AG04450 (cell line): ENCODE measurements at regions of chr17 and their contacts with region 1.

Region 1: GRCh38 chr17:32936894-32937500 is 9.0 kb downstream of the TMEM98 start:
- DNase-seq: peak; percentile 42
- H3K4me3 ChIP-seq: no peak overlapping the region
- H3K27ac ChIP-seq: peak overlapping the region; percentile 39
- H3K27me3 ChIP-seq: no peaks in the 10 kb centered on the region
- CTCF ChIP-seq: peak; percentile 76

Region 2: GRCh38 chr17:32697728-32698625 is 239.0 kb before region 1 on chr17:
- CTCF ChIA-PET with region 1: no interaction called
- POLR2A ChIA-PET with region 1: no interaction called
- DNase-seq: no peak
- H3K4me3 ChIP-seq: no peak overlapping the region
- H3K27ac ChIP-seq: no peak overlapping the region
- H3K27me3 ChIP-seq: no peaks in the 10 kb centered on the region
- CTCF ChIP-seq: no peak

Region 3: GRCh38 chr17:32835291-32835761 is 101.7 kb before region 1 on chr17:
- CTCF ChIA-PET with region 1: no interaction called
- POLR2A ChIA-PET with region 1: no interaction called
- DNase-seq: no peak
- H3K4me3 ChIP-seq: no peak overlapping the region
- H3K27ac ChIP-seq: no peak overlapping the region
- H3K27me3 ChIP-seq: no peaks in the 10 kb centered on the region
- CTCF ChIP-seq: no peak

Region 4: DNA sequence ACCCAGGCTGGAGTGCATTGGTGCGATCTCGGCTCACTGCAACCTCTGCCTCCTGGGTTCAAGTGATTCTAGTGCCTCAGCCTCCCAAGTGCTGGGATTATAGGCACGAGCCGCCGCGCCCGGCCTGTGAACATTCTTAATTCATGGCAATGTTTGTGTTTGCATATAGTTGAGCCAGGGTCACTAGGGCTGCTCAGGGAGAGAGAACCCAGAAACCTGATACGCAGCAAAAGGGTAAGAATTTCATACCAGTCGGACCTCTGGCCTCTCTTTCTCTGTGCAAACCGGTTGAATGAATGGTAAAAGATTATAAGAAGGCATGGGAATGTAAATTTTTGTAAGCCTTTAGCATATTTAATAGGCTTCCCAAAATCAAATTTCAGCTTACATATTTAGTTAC is 16.0 kb before region 1 on chr17:
- CTCF ChIA-PET with region 1: interaction called, 13 read pairs
- POLR2A ChIA-PET with region 1: no interaction called
- DNase-seq: no peak
- H3K4me3 ChIP-seq: no peak overlapping the region
- H3K27ac ChIP-seq: no peak overlapping the region
- H3K27me3 ChIP-seq: no peaks in the 10 kb centered on the region
- CTCF ChIP-seq: no peak